Left lung (tissue), 14 donors: ENCODE measurements at regions of chr19 and their contacts with region 1.

Region 1: GRCh38 chr19:21202865-21203494 is 61.1 kb downstream of the ZNF431 start:
- DNase-seq: peak in 2 of 4 donors; percentile 31 to 57
- ATAC-seq: peak; percentile 86
- H3K4me3 ChIP-seq: no peak overlapping the region
- H3K27ac ChIP-seq: no peak overlapping the region
- H3K4me1 ChIP-seq: no peaks in the 10 kb centered on the region
- H3K27me3 ChIP-seq: no peaks in the 10 kb centered on the region
- CTCF ChIP-seq: peak; percentile 66 to 71

Region 2: GRCh38 chr19:21256722-21257121 is 53.7 kb after region 1 on chr19:
- intact Hi-C with region 1: loop called in 1 of 2 experiments (anchors 2 kb)
- DNase-seq: peak in 1 of 4 donors; percentile 9
- ATAC-seq: peak; percentile 49
- H3K4me3 ChIP-seq: no peak overlapping the region
- H3K27ac ChIP-seq: no peak overlapping the region
- H3K4me1 ChIP-seq: no peaks in the 10 kb centered on the region
- H3K27me3 ChIP-seq: no peaks in the 10 kb centered on the region
- CTCF ChIP-seq: no peak